ENCODE measurements at regions of chr10 and their contacts with region 1.

Region 1: GRCh38 chr10:7756360-7756992 is 31.3 kb downstream of the KIN start:
- DNase-seq: no peak
- ATAC-seq: no peak

Region 2: GRCh38 chr10:7587168-7587864 is 169.2 kb before region 1 on chr10:
- intact Hi-C with region 1: loop called (anchors 5 kb)
- DNase-seq: no peak
- ATAC-seq: no peak

Region 3: DNA sequence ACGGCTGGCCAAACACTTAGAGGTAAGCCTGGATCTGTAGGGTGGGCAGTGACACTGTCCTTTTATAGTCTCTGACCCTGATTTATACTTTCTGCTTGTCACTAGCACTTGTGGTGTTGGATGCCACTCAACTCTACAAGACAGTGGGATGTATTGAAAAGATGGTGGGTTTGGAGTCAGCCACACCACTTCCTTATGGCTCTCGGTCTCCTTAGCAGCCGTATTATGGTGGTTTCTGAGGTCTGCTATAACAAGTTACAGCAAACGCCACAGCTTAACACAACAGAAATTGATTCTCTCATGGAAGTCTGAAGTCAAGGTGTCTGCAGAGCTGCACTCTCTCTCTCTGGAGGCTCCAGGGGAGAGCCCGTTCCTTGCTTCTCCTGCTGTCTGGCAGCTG is 38.7 kb before region 1 on chr10:
- intact Hi-C with region 1: no loop called
- DNase-seq: no peak
- ATAC-seq: no peak